ENCODE measurements at regions of chr6 and their contacts with region 1.

Region 1: DNA sequence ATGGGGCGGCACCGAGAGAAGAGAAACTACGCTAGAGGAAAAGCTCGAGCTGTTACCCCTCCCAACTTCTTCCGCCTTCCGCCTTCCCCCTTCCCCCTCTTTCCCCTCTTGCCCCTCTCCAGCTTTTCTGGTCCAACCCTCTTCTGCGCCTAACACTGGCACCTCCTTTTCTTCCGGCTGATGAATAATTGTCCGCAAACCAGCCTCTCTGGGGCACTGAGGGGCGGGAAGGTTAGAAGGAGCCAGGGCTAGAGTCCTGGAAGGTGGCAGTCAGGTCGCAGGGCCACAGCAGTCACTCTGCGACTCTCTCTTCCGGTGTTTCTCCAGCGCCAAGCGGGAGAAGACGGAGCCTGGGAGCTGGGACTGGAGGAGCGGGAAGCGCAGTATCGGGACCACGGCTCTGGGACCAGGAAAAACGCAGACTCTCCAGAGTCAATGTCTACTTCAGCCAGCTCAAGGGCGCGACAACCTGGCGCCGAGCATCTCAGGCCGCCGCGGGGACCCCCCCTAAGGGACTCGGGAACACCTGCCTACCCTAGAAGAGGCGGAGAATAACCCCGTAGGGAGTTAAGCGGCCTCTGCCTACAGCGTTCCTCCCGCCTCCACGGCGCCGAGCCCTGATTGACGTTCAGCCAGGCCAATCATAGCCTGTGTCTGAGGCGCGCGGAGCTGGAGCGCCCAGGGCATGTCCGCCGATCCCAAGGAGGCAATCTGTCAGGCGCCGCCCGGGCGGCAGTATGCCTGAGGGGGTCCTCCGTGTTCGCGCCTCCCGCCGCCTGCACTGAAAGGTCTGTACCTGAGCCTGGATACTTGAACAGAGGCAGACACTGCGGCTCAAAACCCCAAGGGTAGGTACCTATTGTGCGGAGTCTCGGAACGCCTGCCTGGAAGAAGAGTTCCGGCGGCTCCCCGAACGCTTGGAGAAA is 40.4 kb downstream of the PSMB9 start:
- DNase-seq: peak; percentile 99

Region 2: DNA sequence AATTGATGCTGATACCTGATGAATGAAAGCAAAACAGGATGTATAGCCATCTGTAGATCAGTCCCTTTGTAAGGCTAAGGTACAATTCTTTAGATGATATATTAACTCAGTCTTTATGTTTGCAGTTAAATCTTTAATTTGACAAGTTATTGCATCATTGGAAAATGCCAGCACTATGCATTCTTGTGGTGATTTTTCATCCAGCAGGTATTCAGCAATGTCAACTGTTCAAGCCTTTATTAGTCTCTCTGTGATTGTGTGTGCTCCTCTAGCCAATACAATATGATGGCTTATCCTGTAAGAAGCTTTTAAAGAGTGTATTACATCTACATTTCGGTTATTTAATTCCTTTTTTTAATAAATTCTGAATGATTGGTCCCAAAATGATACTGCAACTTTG is 12.2 kb after region 1 on chr6:
- CTCF ChIA-PET with region 1: interaction called, 3 read pairs
- POLR2A ChIA-PET with region 1: interaction called, 48 read pairs
- DNase-seq: no peak

Region 3: DNA sequence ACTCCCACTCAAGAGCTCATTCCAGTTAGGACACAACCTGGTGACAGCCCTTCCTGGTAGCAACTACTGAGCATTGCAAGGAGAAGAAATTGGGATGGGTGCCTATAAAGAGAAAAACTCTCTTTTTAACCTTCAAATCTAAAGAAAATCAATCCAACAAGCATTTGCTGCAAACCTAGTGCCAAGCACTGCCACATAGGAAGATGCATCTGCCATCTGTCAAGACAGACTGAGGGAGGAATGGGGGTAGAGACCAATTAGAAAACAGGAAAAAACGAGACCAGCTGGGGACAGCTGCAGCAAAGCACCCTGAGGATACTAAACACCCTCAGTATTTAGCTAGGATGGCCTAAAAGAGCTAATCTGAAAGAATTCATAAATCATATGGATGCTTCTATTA is 18.6 kb after region 1 on chr6:
- CTCF ChIA-PET with region 1: interaction called, 3 read pairs
- POLR2A ChIA-PET with region 1: interaction called, 21 read pairs
- DNase-seq: no peak

Region 4: DNA sequence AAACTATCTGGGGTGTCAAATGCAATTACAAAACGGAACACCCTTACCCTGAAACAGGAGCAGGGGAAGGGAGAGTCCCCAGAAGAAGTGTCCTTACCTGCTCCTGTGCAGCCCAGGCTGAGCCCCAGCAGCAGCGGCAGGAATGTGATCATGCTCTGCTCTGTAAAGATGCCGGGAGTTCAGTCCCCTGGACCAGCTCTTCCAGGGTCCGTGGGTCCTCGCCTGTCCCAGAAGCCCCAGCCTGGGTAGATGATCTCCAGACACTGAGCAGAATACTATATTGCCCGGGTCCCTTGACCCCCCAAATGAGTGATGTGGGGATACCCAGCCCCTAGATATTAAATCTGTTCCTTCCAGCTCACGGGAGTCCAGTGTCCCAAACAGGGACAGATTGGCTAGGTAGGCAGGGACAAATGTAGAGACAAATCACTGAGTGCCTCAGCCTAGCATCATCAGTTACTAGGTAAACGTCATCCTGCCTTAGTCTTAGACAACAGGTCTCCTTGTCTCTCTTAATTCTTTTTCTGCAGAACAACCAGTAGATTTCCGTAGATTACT is 46.4 kb after region 1 on chr6 and contains the start of gene HLA-DMB:
- CTCF ChIA-PET with region 1: no interaction called
- POLR2A ChIA-PET with region 1: interaction called, 16 read pairs
- DNase-seq: peak; percentile 92

Region 5: GRCh38 chr6:32947552-32948465 is 53.5 kb after region 1 on chr6:
- CTCF ChIA-PET with region 1: interaction called, 3 read pairs
- POLR2A ChIA-PET with region 1: interaction called, 19 read pairs
- DNase-seq: peak; percentile 59

Measured in HEK293T (cell line).